Mammary epithelial cell (primary cell): ENCODE measurements at regions of chr2 and their contacts with region 1.

Region 1: GRCh38 chr2:135728064-135728743 is 13.5 kb upstream of the UBXN4 start:
- DNase-seq: no peak
- H3K4me3 ChIP-seq: no peak overlapping the region
- H3K27ac ChIP-seq: no peak overlapping the region
- H3K4me1 ChIP-seq: no peaks in the 10 kb centered on the region
- H3K27me3 ChIP-seq: no peaks in the 10 kb centered on the region
- CTCF ChIP-seq: no peak

Region 2: GRCh38 chr2:134670955-134671354 is 1057.2 kb before region 1 on chr2:
- CTCF ChIA-PET with region 1: interaction called, 11 read pairs
- dilution Hi-C with region 1: no loop called
- in situ Hi-C with region 1: no loop called
- intact Hi-C with region 1: no loop called
- DNase-seq: no peak
- H3K4me3 ChIP-seq: no peak overlapping the region
- H3K27ac ChIP-seq: no peak overlapping the region
- H3K4me1 ChIP-seq: no peaks in the 10 kb centered on the region
- H3K27me3 ChIP-seq: no peaks in the 10 kb centered on the region
- CTCF ChIP-seq: no peak

Region 3: GRCh38 chr2:135685361-135685760 is 42.8 kb before region 1 on chr2:
- CTCF ChIA-PET with region 1: no interaction called
- dilution Hi-C with region 1: no loop called
- in situ Hi-C with region 1: no loop called
- intact Hi-C with region 1: no loop called
- DNase-seq: peak; percentile 64
- H3K4me3 ChIP-seq: no peak overlapping the region
- H3K27ac ChIP-seq: no peak overlapping the region
- H3K4me1 ChIP-seq: peaks cover 7% of the 10 kb centered on the region
- H3K27me3 ChIP-seq: no peaks in the 10 kb centered on the region
- CTCF ChIP-seq: no peak